ENCODE measurements at regions of chr2 and their contacts with region 1.

Region 1: GRCh38 chr2:207487650-207488311 is 42.0 kb upstream of the CREB1 start:
- DNase-seq: no peak
- ATAC-seq: no peak
- H3K4me3 ChIP-seq: no peak overlapping the region
- H3K4me3 Mint-ChIP-seq: no peak overlapping the region
- H3K27ac ChIP-seq: no peak overlapping the region
- H3K27ac Mint-ChIP-seq: no peak overlapping the region
- H3K4me1 ChIP-seq: no peaks in the 10 kb centered on the region
- H3K4me1 Mint-ChIP-seq: no peaks in the 10 kb centered on the region
- H3K27me3 ChIP-seq: no peaks in the 10 kb centered on the region
- H3K27me3 Mint-ChIP-seq: peaks cover under 1 to 4% of the 10 kb centered on the region in 2 donors
- CTCF ChIP-seq: no peak

Region 2: GRCh38 chr2:206832873-206833272 is 654.9 kb before region 1 on chr2:
- intact Hi-C with region 1: no loop called
- DNase-seq: no peak
- ATAC-seq: no peak
- H3K4me3 ChIP-seq: no peak overlapping the region
- H3K4me3 Mint-ChIP-seq: no peak overlapping the region
- H3K27ac ChIP-seq: no peak overlapping the region
- H3K27ac Mint-ChIP-seq: no peak overlapping the region
- H3K4me1 ChIP-seq: no peaks in the 10 kb centered on the region
- H3K4me1 Mint-ChIP-seq: no peaks in the 10 kb centered on the region
- H3K27me3 ChIP-seq: no peaks in the 10 kb centered on the region
- H3K27me3 Mint-ChIP-seq: peaks cover 0 to 3% of the 10 kb centered on the region in 2 donors
- CTCF ChIP-seq: no peak

Region 3: DNA sequence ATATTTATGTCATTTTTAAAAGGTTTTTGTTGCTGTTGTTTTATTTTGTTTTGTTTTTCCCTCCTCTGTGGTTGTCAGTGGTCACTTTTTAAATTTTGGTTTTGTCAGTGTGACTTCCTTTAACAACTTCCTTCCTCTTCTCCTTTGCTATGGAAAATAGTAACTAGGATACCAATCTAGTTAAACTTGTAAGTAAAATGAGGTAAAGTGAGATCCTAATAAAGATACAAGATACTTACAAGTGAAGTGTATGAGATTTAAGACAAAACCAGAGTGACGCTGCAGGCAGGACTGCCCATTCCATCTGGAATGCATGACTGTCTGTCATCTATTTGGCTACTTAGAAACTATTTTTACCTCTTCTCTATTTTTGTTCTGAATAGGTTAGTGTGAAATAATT is 11.3 kb after region 1 on chr2:
- intact Hi-C with region 1: loop called (anchors 1 kb)
- DNase-seq: no peak
- ATAC-seq: peak in 1 of 3 donors; percentile 8
- H3K4me3 ChIP-seq: no peak overlapping the region
- H3K4me3 Mint-ChIP-seq: peak overlapping the region; percentile 32
- H3K27ac ChIP-seq: no peak overlapping the region
- H3K27ac Mint-ChIP-seq: peak overlapping the region in 1 of 2 donors; percentile 9
- H3K4me1 ChIP-seq: peaks cover 44% of the 10 kb centered on the region
- H3K4me1 Mint-ChIP-seq: peaks cover 42 to 47% of the 10 kb centered on the region in 2 donors
- H3K27me3 ChIP-seq: no peaks in the 10 kb centered on the region
- H3K27me3 Mint-ChIP-seq: peaks cover 11 to 25% of the 10 kb centered on the region in 2 donors
- CTCF ChIP-seq: no peak

Measured in natural killer cell (primary cell).